Aorta (tissue), 5 donors: ENCODE measurements at regions of chr22 and their contacts with region 1.

Region 1: GRCh38 chr22:30326706-30327362 is at the start of gene TBC1D10A:
- DNase-seq: peak; percentile 92 to 94
- ATAC-seq: peak; percentile 93
- H3K4me3 ChIP-seq: peak within 1 kb of the TSS; percentile 69 to 96
- H3K27ac ChIP-seq: peak within 1 kb of the TSS; percentile 33 to 91
- H3K4me1 ChIP-seq: no peaks in the 10 kb centered on the region
- H3K27me3 ChIP-seq: no peaks in the 10 kb centered on the region
- total RNA-seq, gene TBC1D10A: 32.9 to 45.5 TPM

Region 2: GRCh38 chr22:30305519-30305905 is 21.3 kb before region 1 on chr22:
- intact Hi-C with region 1: loop called in 1 of 2 experiments (anchors 2 kb)
- DNase-seq: peak in 1 of 2 donors; percentile 84
- ATAC-seq: peak; percentile 74
- H3K4me3 ChIP-seq: no peak overlapping the region
- H3K27ac ChIP-seq: peak overlapping the region; percentile 61 to 90
- H3K4me1 ChIP-seq: peaks cover 5 to 11% of the 10 kb centered on the region in 2 donors
- H3K27me3 ChIP-seq: no peaks in the 10 kb centered on the region

Region 3: GRCh38 chr22:30356449-30357235 is 29.8 kb after region 1 on chr22 and contains the starts of genes CCDC157 and SF3A1:
- intact Hi-C with region 1: loop called in 1 of 2 experiments (anchors 2 kb)
- DNase-seq: peak; percentile 94 to 97
- ATAC-seq: peak; percentile 98
- H3K4me3 ChIP-seq: peak within 1 kb of the TSS; percentile 53 to 71
- H3K27ac ChIP-seq: peak within 1 kb of the TSS in 1 of 2 donors; percentile 90
- H3K4me1 ChIP-seq: no peaks in the 10 kb centered on the region
- H3K27me3 ChIP-seq: no peaks in the 10 kb centered on the region
- total RNA-seq, gene CCDC157: 0.87 to 2.4 TPM
- total RNA-seq, gene SF3A1: 112 to 116 TPM

Region 4: DNA sequence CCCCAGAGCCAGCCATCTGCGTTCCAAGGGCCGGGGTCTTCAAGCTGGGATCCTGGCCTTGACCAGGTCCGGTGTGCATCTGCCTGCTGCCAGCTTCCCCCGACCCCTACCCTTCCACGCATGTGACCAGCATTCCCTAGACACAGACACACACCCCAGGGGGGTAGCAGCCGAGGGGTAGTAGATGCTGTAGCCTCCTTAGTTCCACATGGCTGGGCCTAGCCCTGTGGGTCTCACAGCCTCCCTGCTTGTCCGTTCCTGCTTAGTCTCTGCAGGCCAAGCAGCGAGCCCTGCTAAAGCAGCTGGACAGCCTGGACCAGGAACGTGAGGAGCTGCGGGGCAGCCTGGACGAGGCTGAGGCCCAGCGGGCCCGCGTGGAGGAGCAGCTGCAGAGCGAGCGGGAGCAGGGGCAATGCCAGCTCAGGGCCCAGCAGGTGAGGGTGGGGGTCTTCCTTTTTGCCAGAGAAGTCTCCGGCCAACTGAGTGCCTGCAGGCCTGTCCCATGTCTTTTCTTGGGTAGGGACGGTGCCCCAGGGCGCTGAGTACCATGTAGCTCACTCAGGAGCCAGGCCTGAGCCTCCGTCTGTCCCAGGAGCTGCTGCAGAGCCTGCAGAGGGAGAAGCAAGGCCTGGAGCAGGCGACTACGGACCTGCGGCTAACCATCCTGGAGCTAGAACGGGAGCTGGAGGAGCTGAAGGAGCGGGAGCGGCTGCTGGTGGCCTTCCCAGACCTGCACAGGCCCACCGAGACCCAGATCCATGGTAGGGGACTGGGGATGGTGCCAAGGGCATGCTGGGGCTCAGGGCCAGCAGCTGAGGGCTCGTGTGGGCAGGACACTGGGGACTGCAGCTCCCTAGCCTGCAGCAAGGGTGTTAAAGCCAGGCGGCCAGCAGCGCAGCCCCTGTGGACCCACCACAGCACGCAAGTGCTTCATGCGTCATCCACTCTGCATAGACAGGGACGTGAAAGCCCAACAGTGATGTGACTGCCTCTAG is 46.8 kb after region 1 on chr22:
- intact Hi-C with region 1: no loop called
- DNase-seq: no peak
- ATAC-seq: peak; percentile 15
- H3K4me3 ChIP-seq: no peak overlapping the region
- H3K27ac ChIP-seq: no peak overlapping the region
- H3K4me1 ChIP-seq: no peaks in the 10 kb centered on the region
- H3K27me3 ChIP-seq: no peaks in the 10 kb centered on the region

Region 5: DNA sequence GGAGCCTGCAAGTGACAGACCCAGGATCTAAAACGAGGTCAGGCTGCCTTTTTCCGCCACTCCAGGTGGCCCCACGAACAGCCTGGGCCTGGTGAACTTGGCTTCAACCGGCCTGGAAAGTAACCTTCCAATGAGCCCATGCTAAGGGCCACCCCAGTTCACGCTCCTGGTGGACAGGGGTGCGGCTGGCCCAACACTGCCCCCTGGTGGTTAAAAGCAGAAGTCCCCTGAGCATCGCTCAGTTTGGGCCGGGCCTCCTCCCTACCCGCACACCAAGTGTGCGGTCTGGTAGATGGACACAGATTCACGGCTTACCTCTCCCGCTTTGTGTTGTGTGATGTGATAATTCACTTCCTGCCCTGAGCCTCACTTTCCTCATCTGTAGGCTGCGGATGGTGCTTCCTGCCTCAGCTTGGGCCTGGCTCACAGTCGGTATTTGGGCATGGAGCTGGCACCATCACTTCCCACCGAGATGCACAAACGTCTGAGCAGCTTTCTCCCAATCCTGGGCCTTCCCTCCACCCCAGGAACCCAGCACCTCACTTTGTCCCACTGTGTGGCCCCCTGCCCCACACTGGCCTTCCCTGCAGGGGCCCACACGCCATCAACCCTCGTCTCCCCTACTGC is 158.6 kb after region 1 on chr22:
- intact Hi-C with region 1: no loop called
- DNase-seq: peak; percentile 68 to 85
- ATAC-seq: peak; percentile 76
- H3K4me3 ChIP-seq: no peak overlapping the region
- H3K27ac ChIP-seq: no peak overlapping the region
- H3K4me1 ChIP-seq: no peaks in the 10 kb centered on the region
- H3K27me3 ChIP-seq: no peaks in the 10 kb centered on the region